GM12878 (cell line): ENCODE measurements at regions of chrX and their contacts with region 1.

Region 1: DNA sequence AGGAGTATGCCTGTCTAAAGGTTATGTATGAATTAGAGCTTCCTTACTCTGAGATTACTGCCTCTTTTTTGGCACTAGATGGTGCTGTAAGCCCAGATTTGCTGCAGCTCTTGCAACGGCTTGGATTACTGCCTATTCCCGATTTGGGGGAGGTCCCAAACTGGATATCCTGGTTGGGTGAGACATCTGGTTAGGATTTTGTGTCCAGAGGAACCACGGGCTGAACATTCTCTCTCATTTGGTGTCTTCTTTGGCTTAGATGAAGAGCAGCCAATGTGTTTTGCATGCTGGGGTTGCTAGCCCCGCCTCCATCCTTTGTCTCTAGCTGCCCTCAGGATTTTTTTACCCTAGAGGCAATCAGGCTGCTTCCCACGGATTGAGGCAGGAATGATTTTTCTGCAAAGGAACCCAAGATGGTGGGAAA is 31.9 kb downstream of the F8A1 start:
- DNase-seq: peak; percentile 16
- ATAC-seq: peak; percentile 91
- H3K4me3 ChIP-seq: no peak overlapping the region
- H3K27ac ChIP-seq: no peak overlapping the region
- H3K4me1 ChIP-seq: no peaks in the 10 kb centered on the region
- H3K27me3 ChIP-seq: no peaks in the 10 kb centered on the region
- CTCF ChIP-seq: peak; percentile 67 to 75 (median 69)
- EP300 ChIP-seq: no peak
- POLR2A ChIP-seq: no peak
- RAD21 ChIP-seq: peak; percentile 84

Region 2: GRCh38 chrX:154804957-154805695 is 112.9 kb before region 1 on chrX and contains the start of gene MPP1:
- CTCF ChIA-PET with region 1: no interaction called
- POLR2A ChIA-PET with region 1: no interaction called
- RAD21 ChIA-PET with region 1: no interaction called
- SMC1A ChIA-PET with region 1: no interaction called
- in situ Hi-C with region 1: no loop called
- intact Hi-C with region 1: no loop called
- DNase-seq: peak; percentile 36
- ATAC-seq: peak; percentile 99
- H3K4me3 ChIP-seq: peak within 1 kb of the TSS; percentile 70
- H3K27ac ChIP-seq: no peak within 1 kb of the TSS
- H3K4me1 ChIP-seq: no peaks in the 10 kb centered on the region
- H3K27me3 ChIP-seq: no peaks in the 10 kb centered on the region
- CTCF ChIP-seq: no peak
- EP300 ChIP-seq: no peak
- POLR2A ChIP-seq: peak; percentile 57
- RAD21 ChIP-seq: no peak
- polyA plus RNA-seq, gene MPP1: 11.9 to 17.9 TPM

Region 3: GRCh38 chrX:154902408-154902807 is 15.7 kb before region 1 on chrX:
- CTCF ChIA-PET with region 1: interaction called, 31 read pairs
- POLR2A ChIA-PET with region 1: no interaction called
- RAD21 ChIA-PET with region 1: interaction called, 7 read pairs
- SMC1A ChIA-PET with region 1: interaction called, 18 read pairs
- in situ Hi-C with region 1: no loop called
- intact Hi-C with region 1: no loop called
- DNase-seq: no peak
- ATAC-seq: peak; percentile 85
- H3K4me3 ChIP-seq: no peak overlapping the region
- H3K27ac ChIP-seq: no peak overlapping the region
- H3K4me1 ChIP-seq: no peaks in the 10 kb centered on the region
- H3K27me3 ChIP-seq: no peaks in the 10 kb centered on the region
- CTCF ChIP-seq: no peak
- EP300 ChIP-seq: no peak
- POLR2A ChIP-seq: no peak
- RAD21 ChIP-seq: no peak

Region 4: GRCh38 chrX:155056877-155057792 is 139.1 kb after region 1 on chrX:
- CTCF ChIA-PET with region 1: interaction called, 41 read pairs
- POLR2A ChIA-PET with region 1: no interaction called
- RAD21 ChIA-PET with region 1: interaction called, 17 read pairs
- SMC1A ChIA-PET with region 1: interaction called, 5 read pairs
- in situ Hi-C with region 1: no loop called
- intact Hi-C with region 1: loop called (anchors 5 kb)
- DNase-seq: peak; percentile 24
- ATAC-seq: peak; percentile 95
- H3K4me3 ChIP-seq: peak overlapping the region; percentile 24; the same call in 1 of the 2 replicates
- H3K27ac ChIP-seq: no peak overlapping the region; the same call in 1 of the 2 replicates
- H3K4me1 ChIP-seq: no peaks in the 10 kb centered on the region; the same call in 1 of the 2 replicates
- H3K27me3 ChIP-seq: no peaks in the 10 kb centered on the region
- CTCF ChIP-seq: peak; percentile 69 to 77 (median 73)
- EP300 ChIP-seq: no peak
- POLR2A ChIP-seq: no peak
- RAD21 ChIP-seq: peak; percentile 63

Region 5: DNA sequence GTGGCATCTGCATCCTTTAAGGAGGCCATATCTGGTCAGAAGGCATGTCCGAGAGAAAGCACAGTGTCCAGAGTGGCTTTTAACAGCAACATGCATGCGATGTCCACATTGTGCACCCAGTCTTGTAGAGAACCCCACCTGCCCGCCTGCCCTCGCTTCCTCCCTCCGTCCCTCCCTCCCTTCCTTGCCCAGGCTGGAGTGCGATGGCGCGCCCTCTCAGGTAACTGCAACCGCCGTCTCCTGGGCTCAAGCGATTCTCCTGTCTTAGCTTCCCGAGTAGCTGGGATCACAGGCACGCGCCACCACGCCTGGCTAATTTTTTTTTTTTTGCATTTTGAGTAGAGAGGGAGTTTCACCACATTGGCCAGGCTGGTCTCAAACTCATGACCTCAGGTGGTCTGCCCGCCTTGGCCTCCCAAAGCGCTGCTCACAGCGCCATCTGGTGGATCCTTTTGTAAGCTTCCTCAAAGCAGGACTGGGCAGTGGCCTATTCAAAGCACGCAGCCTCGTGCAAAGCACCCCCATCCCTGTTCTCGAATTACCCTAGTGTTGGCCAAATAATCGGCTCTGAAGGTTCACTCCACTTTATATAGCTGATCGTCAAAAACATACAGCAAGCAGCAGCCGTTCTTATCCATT is 168.2 kb after region 1 on chrX:
- CTCF ChIA-PET with region 1: interaction called, 8 read pairs
- POLR2A ChIA-PET with region 1: no interaction called
- RAD21 ChIA-PET with region 1: no interaction called
- SMC1A ChIA-PET with region 1: interaction called, 4 read pairs
- in situ Hi-C with region 1: no loop called
- intact Hi-C with region 1: loop called (anchors 10 kb)
- DNase-seq: no peak
- ATAC-seq: peak; percentile 80
- H3K4me3 ChIP-seq: no peak overlapping the region
- H3K27ac ChIP-seq: no peak overlapping the region
- H3K4me1 ChIP-seq: no peaks in the 10 kb centered on the region
- H3K27me3 ChIP-seq: no peaks in the 10 kb centered on the region
- CTCF ChIP-seq: peak; percentile 37 to 56 (median 44); a peak in 4 of 6 replicates
- EP300 ChIP-seq: no peak
- POLR2A ChIP-seq: no peak
- RAD21 ChIP-seq: peak; percentile 45; the same call in 1 of the 2 replicates

Region 6: GRCh38 chrX:155115174-155115819 is 197.2 kb after region 1 on chrX:
- CTCF ChIA-PET with region 1: no interaction called
- POLR2A ChIA-PET with region 1: no interaction called
- RAD21 ChIA-PET with region 1: no interaction called
- SMC1A ChIA-PET with region 1: no interaction called
- in situ Hi-C with region 1: no loop called
- intact Hi-C with region 1: no loop called
- DNase-seq: no peak
- ATAC-seq: no peak
- H3K4me3 ChIP-seq: no peak overlapping the region
- H3K27ac ChIP-seq: no peak overlapping the region
- H3K4me1 ChIP-seq: no peaks in the 10 kb centered on the region
- H3K27me3 ChIP-seq: no peaks in the 10 kb centered on the region
- CTCF ChIP-seq: no peak
- EP300 ChIP-seq: no peak
- POLR2A ChIP-seq: no peak
- RAD21 ChIP-seq: no peak

Region 7: GRCh38 chrX:155134255-155134654 is 216.2 kb after region 1 on chrX:
- CTCF ChIA-PET with region 1: interaction called, 16 read pairs
- POLR2A ChIA-PET with region 1: no interaction called
- RAD21 ChIA-PET with region 1: interaction called, 6 read pairs
- SMC1A ChIA-PET with region 1: interaction called, 4 read pairs
- in situ Hi-C with region 1: no loop called
- intact Hi-C with region 1: no loop called
- DNase-seq: no peak
- ATAC-seq: no peak
- H3K4me3 ChIP-seq: no peak overlapping the region
- H3K27ac ChIP-seq: no peak overlapping the region
- H3K4me1 ChIP-seq: no peaks in the 10 kb centered on the region
- H3K27me3 ChIP-seq: no peaks in the 10 kb centered on the region
- CTCF ChIP-seq: no peak
- EP300 ChIP-seq: no peak
- POLR2A ChIP-seq: no peak
- RAD21 ChIP-seq: no peak

Region 8: GRCh38 chrX:155819966-155820491 is 902.0 kb after region 1 on chrX:
- CTCF ChIA-PET with region 1: no interaction called
- POLR2A ChIA-PET with region 1: no interaction called
- RAD21 ChIA-PET with region 1: no interaction called
- SMC1A ChIA-PET with region 1: no interaction called
- in situ Hi-C with region 1: no loop called
- intact Hi-C with region 1: loop called (anchors 2 kb)
- DNase-seq: peak; percentile 11
- ATAC-seq: peak; percentile 83
- H3K4me3 ChIP-seq: no peak overlapping the region
- H3K27ac ChIP-seq: no peak overlapping the region
- H3K4me1 ChIP-seq: no peaks in the 10 kb centered on the region
- H3K27me3 ChIP-seq: no peaks in the 10 kb centered on the region
- CTCF ChIP-seq: peak; percentile 51 to 64 (median 51); a peak in 5 of 6 replicates
- EP300 ChIP-seq: no peak
- POLR2A ChIP-seq: no peak
- RAD21 ChIP-seq: peak; percentile 92